Heart right ventricle (tissue), 16 donors: ENCODE measurements at regions of chr2 and their contacts with region 1.

Region 1: GRCh38 chr2:46029332-46029811 is 267.8 kb upstream of the EPAS1 start:
- DNase-seq: peak; percentile 25 to 69
- ATAC-seq: peak; percentile 80 to 95 (median 92)
- H3K4me3 ChIP-seq: no peak overlapping the region
- H3K27ac ChIP-seq: peak overlapping the region in 9 of 10 donors; percentile 36 to 90 (median 74)
- H3K4me1 ChIP-seq: peaks cover 0 to 52% (median 20%) of the 10 kb centered on the region in 9 donors
- H3K27me3 ChIP-seq: no peaks in the 10 kb centered on the region
- CTCF ChIP-seq: peak in 8 of 9 donors; percentile 27 to 61 (median 52)

Region 2: DNA sequence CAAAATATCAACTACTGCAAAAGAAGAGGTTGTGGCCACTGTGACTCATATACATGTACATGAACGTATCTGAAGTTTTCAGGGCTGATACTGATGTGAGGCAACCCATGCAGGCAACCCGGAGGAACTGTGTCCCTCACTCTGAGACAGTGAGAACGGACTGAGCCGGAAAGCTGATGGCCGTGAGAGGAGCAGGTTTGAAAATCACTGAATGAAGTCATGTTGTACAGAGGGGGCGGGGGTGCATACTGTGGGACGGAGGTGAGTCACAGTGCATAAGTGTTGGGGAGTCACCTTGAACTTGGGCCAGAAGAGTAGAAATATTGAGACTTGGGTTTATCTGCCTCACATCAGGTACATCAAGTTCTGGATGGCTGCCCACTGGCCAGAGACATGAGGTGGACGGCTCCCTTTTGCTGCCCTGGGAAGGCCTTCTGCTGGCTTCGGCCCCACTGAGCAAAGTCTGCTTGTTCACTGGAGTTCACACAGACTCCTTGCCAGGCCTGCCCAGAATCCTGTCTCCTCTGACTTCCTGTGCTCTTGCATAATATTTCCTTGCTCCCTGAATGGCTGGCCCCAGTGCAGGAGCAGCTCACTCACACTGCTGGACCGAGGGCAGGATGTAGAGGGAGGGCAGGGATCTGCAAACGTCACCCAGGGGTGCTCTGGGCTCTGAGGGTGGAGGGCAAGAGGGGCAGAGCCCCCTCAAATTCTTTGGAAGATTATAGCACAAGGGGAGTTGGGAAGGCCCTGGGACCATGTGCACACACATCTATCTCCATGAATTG is 285.9 kb after region 1 on chr2:
- intact Hi-C with region 1: loop called in 1 of 10 experiments (anchors 5 kb)
- DNase-seq: peak; percentile 88 to 94
- ATAC-seq: peak; percentile 91 to 94 (median 92)
- H3K4me3 ChIP-seq: peak overlapping the region in 3 of 10 donors; percentile 4 to 12 (median 10)
- H3K27ac ChIP-seq: peak overlapping the region; percentile 49 to 99 (median 87)
- H3K4me1 ChIP-seq: peaks cover 52 to 100% (median 96%) of the 10 kb centered on the region in 9 donors
- H3K27me3 ChIP-seq: no peaks in the 10 kb centered on the region
- CTCF ChIP-seq: no peak

Region 3: DNA sequence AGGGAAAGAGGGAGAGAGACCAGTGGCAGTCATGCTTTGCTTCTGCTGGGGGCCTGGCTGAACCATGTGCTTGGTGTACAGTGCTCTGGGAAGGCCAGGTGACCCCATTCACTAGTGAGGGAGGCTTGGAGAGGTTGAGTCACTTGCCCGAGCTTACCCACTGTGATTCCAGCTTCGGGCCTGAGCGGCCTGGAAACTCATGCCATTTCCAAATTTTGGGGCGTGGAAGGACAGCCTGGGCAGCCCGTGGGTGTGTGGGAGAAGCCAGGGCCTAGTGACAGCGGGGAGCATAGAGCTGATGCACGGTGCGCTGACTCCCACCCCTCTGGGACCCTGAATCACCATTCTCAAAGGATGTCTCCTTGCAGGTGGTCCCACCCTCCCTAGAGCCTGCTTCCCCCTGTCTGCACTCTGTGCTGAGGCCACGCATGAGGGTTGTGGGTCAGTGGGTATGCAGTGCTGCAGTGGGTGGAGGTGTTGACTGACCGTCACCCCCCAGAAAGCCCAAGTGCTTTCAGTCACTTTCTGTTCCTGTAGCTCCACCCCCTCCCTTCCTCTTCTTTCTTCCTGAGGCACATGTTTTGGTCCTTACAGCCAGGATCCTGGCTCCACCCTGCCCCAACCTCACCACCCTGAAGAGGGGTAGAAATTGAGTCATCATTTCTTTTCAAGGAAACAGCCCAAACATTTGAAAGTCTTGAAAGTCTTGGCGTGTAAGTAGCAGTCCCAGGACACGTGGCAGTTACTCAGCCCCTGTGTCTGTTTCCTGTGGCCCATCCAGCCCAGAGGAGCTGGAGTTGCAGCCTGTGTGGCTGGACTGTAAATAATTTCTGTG is 955.5 kb after region 1 on chr2:
- intact Hi-C with region 1: no loop called
- DNase-seq: peak in 1 of 2 donors; percentile 54
- ATAC-seq: peak; percentile 2 to 66 (median 26)
- H3K4me3 ChIP-seq: no peak overlapping the region
- H3K27ac ChIP-seq: peak overlapping the region; percentile 21 to 87 (median 80)
- H3K4me1 ChIP-seq: peaks cover 45 to 87% (median 77%) of the 10 kb centered on the region in 9 donors
- H3K27me3 ChIP-seq: no peaks in the 10 kb centered on the region
- CTCF ChIP-seq: no peak